PC-9 (cell line): ENCODE measurements at regions of chr2 and their contacts with region 1.

Region 1: GRCh38 chr2:121736462-121737341 is at the start of gene NIFK:
- DNase-seq: peak; percentile 94 to 100
- H3K4me3 ChIP-seq: peak within 1 kb of the TSS; percentile 82
- H3K27ac ChIP-seq: peak within 1 kb of the TSS; percentile 44
- H3K4me1 ChIP-seq: peaks cover 10% of the 10 kb centered on the region
- H3K27me3 ChIP-seq: no peaks in the 10 kb centered on the region
- CTCF ChIP-seq: no peak
- total RNA-seq, gene NIFK: 48.1 and 75.9 TPM in 2 replicates

Region 2: DNA sequence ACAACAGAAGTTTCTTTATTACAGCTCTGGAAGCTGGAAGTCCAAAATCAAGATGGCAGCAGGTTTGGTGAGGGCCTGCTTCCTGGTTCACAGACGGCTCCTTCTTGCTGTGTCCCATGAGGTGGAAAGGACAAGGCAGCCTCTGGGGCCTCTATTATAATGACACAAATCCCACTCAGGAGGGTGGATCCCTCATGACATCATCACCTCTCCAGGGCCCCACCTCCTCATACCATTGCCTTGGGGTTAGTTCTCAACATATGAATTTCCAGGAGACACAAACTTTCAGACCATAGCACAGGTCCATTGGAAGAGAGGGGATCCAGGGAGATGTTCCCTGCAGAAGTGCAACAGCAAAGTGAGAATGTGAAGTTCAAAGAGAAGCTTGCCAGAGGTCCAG is 654.5 kb before region 1 on chr2:
- CTCF ChIA-PET with region 1: interaction called, 15 read pairs
- POLR2A ChIA-PET with region 1: no interaction called
- intact Hi-C with region 1: no loop called
- DNase-seq: no peak
- H3K4me3 ChIP-seq: no peak overlapping the region
- H3K27ac ChIP-seq: no peak overlapping the region
- H3K4me1 ChIP-seq: no peaks in the 10 kb centered on the region
- H3K27me3 ChIP-seq: 0 out of 2 replicates have a peak, but pooled peaks cover 5% of the 10 kb centered on the region
- CTCF ChIP-seq: no peak

Region 3: DNA sequence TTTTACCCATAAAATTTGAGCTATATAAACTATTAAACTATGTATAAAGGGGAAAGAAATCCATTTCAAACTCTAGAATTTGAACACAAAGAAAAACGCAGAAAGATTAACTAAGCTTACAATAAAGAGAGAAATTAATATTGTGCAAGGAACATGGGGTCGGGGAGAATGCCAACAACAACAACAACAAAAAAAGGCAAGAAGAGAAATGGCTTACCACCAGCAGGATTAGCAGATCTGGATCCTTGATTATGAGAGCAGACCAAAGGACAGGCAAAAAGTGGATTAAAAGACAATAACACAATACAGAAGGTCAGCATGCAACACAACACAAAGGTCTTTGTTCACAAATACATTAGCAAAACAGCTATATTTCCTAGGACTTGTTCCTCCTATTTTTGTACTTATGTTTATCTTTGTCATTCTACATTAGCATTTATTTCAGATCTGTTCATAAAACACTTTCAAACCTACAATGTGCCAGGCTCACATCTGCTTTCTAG is 309.5 kb before region 1 on chr2:
- CTCF ChIA-PET with region 1: no interaction called
- POLR2A ChIA-PET with region 1: no interaction called
- intact Hi-C with region 1: no loop called
- DNase-seq: no peak
- H3K4me3 ChIP-seq: no peak overlapping the region
- H3K27ac ChIP-seq: no peak overlapping the region
- H3K4me1 ChIP-seq: no peaks in the 10 kb centered on the region
- H3K27me3 ChIP-seq: no peaks in the 10 kb centered on the region
- CTCF ChIP-seq: no peak

Region 4: GRCh38 chr2:121530212-121530705 is 206.4 kb before region 1 on chr2:
- CTCF ChIA-PET with region 1: interaction called, 3 read pairs
- POLR2A ChIA-PET with region 1: interaction called, 20 read pairs
- intact Hi-C with region 1: loop called (anchors 1 kb)
- DNase-seq: peak; percentile 68 to 81
- H3K4me3 ChIP-seq: peak overlapping the region; percentile 66
- H3K27ac ChIP-seq: peak overlapping the region; percentile 95
- H3K4me1 ChIP-seq: peaks cover 30% of the 10 kb centered on the region
- H3K27me3 ChIP-seq: no peaks in the 10 kb centered on the region
- CTCF ChIP-seq: no peak

Region 5: GRCh38 chr2:121755236-121756111 is 18.8 kb after region 1 on chr2 and contains the start of gene TSN:
- CTCF ChIA-PET with region 1: no interaction called
- POLR2A ChIA-PET with region 1: interaction called, 3 read pairs
- intact Hi-C with region 1: loop called (anchors 2 kb)
- DNase-seq: peak; percentile 95 to 98
- H3K4me3 ChIP-seq: peak within 1 kb of the TSS; percentile 86
- H3K27ac ChIP-seq: peak within 1 kb of the TSS; percentile 52
- H3K4me1 ChIP-seq: peaks cover 19% of the 10 kb centered on the region
- H3K27me3 ChIP-seq: no peaks in the 10 kb centered on the region
- CTCF ChIP-seq: no peak
- total RNA-seq, gene TSN: 69.8 and 70.4 TPM in 2 replicates

Region 6: GRCh38 chr2:122236152-122236874 is 499.6 kb after region 1 on chr2:
- CTCF ChIA-PET with region 1: no interaction called
- POLR2A ChIA-PET with region 1: interaction called, 13 read pairs
- intact Hi-C with region 1: no loop called
- DNase-seq: peak; percentile 36 to 74
- H3K4me3 ChIP-seq: no peak overlapping the region
- H3K27ac ChIP-seq: no peak overlapping the region
- H3K4me1 ChIP-seq: 0 out of 2 replicates have a peak, but pooled peaks cover 4% of the 10 kb centered on the region
- H3K27me3 ChIP-seq: peaks cover 53% of the 10 kb centered on the region
- CTCF ChIP-seq: no peak